Activated CD4-positive, alpha-beta memory T cell treated with anti-CD3 and anti-CD28 coated beads for 36 hours (primary cell): ENCODE measurements at regions of chr7 and their contacts with region 1.

Region 1: GRCh38 chr7:107501593-107501992 is 31.7 kb downstream of the GPR22 start:
- DNase-seq: peak; percentile 50
- H3K4me3 Mint-ChIP-seq: no peak overlapping the region
- H3K27ac Mint-ChIP-seq: no peak overlapping the region
- H3K4me1 Mint-ChIP-seq: peaks cover 24% of the 10 kb centered on the region
- H3K27me3 Mint-ChIP-seq: no peaks in the 10 kb centered on the region

Region 2: GRCh38 chr7:107201795-107202450 is 299.7 kb before region 1 on chr7:
- CTCF ChIA-PET with region 1: interaction called, 4 read pairs
- POLR2A ChIA-PET with region 1: no interaction called
- intact Hi-C with region 1: loop called (anchors 5 kb)
- DNase-seq: peak; percentile 53
- H3K4me3 Mint-ChIP-seq: no peak overlapping the region
- H3K27ac Mint-ChIP-seq: no peak overlapping the region
- H3K4me1 Mint-ChIP-seq: no peaks in the 10 kb centered on the region
- H3K27me3 Mint-ChIP-seq: no peaks in the 10 kb centered on the region

Region 3: DNA sequence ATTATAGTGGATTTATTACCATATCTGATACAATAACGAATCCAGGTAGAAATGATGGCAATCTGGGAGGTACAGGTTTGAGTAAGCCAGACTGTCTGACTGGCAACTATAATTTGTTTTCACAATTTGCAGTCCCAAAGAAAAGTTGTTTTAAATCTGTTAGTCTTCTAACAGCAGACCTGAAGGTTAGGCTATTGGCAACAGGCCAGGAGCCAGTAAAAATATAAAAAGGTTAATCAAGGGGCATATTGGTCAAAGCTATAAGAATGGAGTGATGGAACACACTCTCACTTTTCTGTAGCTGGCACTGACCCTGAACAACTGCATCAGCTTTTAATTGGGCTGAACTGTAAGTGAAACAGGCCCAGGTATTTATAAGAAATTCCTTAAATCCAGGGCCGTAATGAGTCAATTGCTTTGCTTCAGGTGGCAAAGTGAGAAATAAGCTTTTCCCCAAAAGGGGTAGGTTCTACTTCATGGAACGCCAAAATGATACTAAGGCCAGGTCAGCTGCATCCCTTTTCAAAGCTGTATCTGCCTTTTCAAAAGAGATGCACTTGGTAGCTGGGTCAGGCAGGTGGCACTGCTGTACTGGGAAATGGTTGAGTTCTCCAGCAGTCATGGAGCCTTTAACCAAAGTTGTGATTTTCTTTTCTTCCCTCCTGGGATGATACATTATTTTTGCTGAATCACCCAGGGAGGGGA is 38.7 kb before region 1 on chr7:
- CTCF ChIA-PET with region 1: interaction called, 11 read pairs
- POLR2A ChIA-PET with region 1: no interaction called
- intact Hi-C with region 1: no loop called
- DNase-seq: peak; percentile 61
- H3K4me3 Mint-ChIP-seq: no peak overlapping the region
- H3K27ac Mint-ChIP-seq: no peak overlapping the region
- H3K4me1 Mint-ChIP-seq: no peaks in the 10 kb centered on the region
- H3K27me3 Mint-ChIP-seq: no peaks in the 10 kb centered on the region

Region 4: GRCh38 chr7:107652642-107653041 is 151.0 kb after region 1 on chr7:
- CTCF ChIA-PET with region 1: no interaction called
- POLR2A ChIA-PET with region 1: no interaction called
- intact Hi-C with region 1: no loop called
- DNase-seq: no peak
- H3K4me3 Mint-ChIP-seq: no peak overlapping the region
- H3K27ac Mint-ChIP-seq: no peak overlapping the region
- H3K4me1 Mint-ChIP-seq: peaks cover 6% of the 10 kb centered on the region
- H3K27me3 Mint-ChIP-seq: peaks cover 21% of the 10 kb centered on the region

Region 5: DNA sequence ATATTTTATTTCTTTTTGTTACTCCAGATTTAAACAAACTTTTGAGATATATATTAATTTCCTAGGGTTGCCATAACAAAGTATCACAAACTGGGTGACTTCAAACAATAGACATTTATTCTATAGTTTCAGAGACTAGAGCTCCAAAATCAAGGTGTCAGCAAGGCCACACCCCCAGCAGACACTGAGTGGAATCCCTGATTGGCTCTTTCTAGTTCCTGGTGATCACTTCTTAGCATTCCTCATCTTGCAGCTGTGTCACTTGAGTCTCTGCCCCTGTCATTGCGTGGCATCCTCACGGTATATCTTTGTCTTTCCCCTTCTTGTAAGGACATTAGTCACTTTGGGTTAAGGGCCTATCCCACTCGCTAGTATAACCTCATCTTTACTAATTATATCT is 309.0 kb after region 1 on chr7:
- CTCF ChIA-PET with region 1: no interaction called
- POLR2A ChIA-PET with region 1: no interaction called
- intact Hi-C with region 1: no loop called
- DNase-seq: peak; percentile 17
- H3K4me3 Mint-ChIP-seq: no peak overlapping the region
- H3K27ac Mint-ChIP-seq: no peak overlapping the region
- H3K4me1 Mint-ChIP-seq: peaks cover 23% of the 10 kb centered on the region
- H3K27me3 Mint-ChIP-seq: no peaks in the 10 kb centered on the region